B cell (primary cell): ENCODE measurements at regions of chr17 and their contacts with region 1.

Region 1: DNA sequence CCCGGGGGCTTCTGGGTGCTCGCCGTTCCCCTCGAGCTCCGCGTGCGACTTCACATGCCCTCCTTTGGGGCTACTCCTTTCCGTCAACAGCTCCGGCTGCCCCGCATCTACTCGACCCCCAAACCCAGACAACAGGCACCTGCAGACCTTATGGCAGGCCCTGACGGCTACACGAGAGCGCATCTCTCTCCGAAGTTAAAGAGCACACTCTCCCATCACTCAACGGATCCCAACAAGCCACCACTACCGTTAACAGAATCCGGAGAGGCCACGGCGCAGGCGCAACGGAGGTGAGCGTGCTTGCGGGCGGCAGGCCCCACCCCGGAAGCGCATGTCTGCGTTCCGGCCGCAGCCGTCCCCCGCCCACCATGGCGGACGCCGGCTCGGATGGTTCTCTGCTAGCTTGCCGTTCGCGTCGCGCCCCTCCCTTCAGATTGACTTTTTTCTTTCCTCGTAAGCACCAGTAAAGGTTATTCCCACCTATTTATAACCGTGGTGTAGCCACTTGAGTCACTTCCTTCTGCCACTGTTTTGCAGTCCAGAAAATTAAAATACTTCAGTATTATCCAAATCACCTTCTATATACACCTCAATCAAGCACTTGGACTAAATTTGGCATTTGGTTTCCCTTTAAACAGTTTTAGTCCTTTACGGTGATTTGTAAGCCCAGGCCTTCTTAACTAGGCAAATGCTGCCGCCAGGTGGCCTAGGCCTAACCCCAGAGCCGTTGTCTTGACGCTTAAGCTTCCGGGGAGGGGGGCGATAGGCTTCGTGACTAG is at the start of gene POLG2:
- DNase-seq: peak; percentile 95
- ATAC-seq: peak; percentile 86
- H3K4me3 ChIP-seq: peak within 1 kb of the TSS; percentile 71 to 90 (median 74)
- H3K4me3 Mint-ChIP-seq: peak within 1 kb of the TSS; percentile 99
- H3K27ac ChIP-seq: peak within 1 kb of the TSS; percentile 76 to 82
- H3K27ac Mint-ChIP-seq: peak within 1 kb of the TSS; percentile 98
- H3K4me1 ChIP-seq: peaks cover 29% of the 10 kb centered on the region in 2 donors
- H3K4me1 Mint-ChIP-seq: peaks cover 68% of the 10 kb centered on the region
- H3K27me3 ChIP-seq: no peaks in the 10 kb centered on the region
- H3K27me3 Mint-ChIP-seq: no peaks in the 10 kb centered on the region
- CTCF ChIP-seq: peak; percentile 55
- total RNA-seq, gene POLG2: 74.5 and 84.8 TPM in 2 replicates

Region 2: DNA sequence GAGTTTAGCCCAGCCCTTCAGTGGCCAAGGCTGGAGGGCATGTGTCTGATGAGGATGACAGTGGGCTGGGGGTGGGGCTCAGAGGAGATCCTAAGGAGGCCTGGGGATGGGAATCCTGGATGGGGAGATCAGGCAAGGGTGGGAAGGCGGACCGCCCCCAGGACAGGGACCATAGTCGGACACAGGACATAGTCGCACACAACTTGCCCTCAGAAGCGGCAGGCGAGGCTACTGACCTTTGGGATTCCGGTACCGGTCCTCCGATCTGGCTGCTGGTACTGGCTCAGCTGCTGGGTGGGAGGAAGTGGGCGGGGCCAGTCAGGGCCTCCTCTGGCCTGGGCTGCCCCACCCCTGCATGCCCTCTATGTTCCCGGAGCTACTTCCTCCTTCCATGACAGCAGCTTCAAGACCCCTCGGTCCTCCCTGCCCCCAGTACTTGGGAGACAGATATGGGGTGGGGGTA is 565.8 kb before region 1 on chr17:
- CTCF ChIA-PET with region 1: no interaction called
- POLR2A ChIA-PET with region 1: no interaction called
- intact Hi-C with region 1: loop called (anchors 5 kb)
- DNase-seq: peak; percentile 77
- ATAC-seq: peak; percentile 39
- H3K4me3 ChIP-seq: peak overlapping the region; percentile 80 to 100 (median 97)
- H3K4me3 Mint-ChIP-seq: peak overlapping the region; percentile 99
- H3K27ac ChIP-seq: peak overlapping the region; percentile 83 to 85
- H3K27ac Mint-ChIP-seq: peak overlapping the region; percentile 97
- H3K4me1 ChIP-seq: peaks cover 72 to 85% of the 10 kb centered on the region in 2 donors
- H3K4me1 Mint-ChIP-seq: peaks cover 86% of the 10 kb centered on the region
- H3K27me3 ChIP-seq: no peaks in the 10 kb centered on the region
- H3K27me3 Mint-ChIP-seq: no peaks in the 10 kb centered on the region
- CTCF ChIP-seq: no peak

Region 3: DNA sequence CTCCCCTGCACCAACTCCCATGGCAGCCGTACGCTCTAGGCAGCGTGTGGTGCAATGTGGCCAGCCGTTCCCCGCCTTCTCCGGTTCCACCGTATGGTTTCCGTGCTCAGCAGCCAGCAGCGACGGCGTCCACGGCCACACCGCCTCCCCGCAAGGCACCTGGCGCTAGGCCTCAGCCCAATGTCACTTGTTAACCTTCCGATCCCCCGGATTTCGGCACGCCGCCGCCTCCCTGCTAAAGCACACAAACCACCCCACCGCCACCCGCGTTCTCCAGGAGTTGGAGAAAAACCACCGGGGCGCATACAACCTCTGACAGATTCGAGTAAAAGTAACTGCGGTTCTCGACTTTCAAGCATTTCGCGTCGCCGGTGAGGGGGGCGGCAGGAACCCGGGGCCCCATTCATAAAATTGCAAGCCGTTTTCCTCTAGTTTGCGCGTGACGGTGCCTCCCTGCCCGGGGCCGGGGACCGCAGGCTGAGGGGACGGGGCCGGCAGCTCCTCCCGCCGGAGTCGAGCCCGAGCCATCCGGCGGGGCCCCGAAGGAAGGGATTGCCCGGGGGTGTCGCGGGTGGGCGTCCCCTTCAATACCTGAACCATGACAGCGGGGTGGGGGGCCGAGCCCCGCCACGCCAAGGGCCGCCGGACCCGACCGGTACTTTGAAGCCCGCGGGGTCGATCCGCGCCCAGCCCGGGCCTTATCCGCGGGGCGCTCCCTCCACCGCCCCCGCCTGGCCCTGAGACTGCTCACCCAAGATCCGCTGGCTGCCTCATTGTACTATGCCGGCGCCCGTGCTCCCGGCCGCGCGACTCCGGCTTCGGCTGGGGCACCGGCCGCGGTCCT is 234.3 kb before region 1 on chr17 and contains the start of gene TEX2:
- CTCF ChIA-PET with region 1: no interaction called
- POLR2A ChIA-PET with region 1: no interaction called
- intact Hi-C with region 1: loop called (anchors 2 kb)
- DNase-seq: peak; percentile 67
- ATAC-seq: peak; percentile 25
- H3K4me3 ChIP-seq: peak within 1 kb of the TSS; percentile 54 to 89 (median 74)
- H3K4me3 Mint-ChIP-seq: peak within 1 kb of the TSS; percentile 92
- H3K27ac ChIP-seq: peak within 1 kb of the TSS; percentile 48 to 68
- H3K27ac Mint-ChIP-seq: peak within 1 kb of the TSS; percentile 90
- H3K4me1 ChIP-seq: peaks cover 10 to 22% of the 10 kb centered on the region in 2 donors
- H3K4me1 Mint-ChIP-seq: peaks cover 28% of the 10 kb centered on the region
- H3K27me3 ChIP-seq: peaks cover 0 to 6% (median 0%) of the 10 kb centered on the region in 4 experiments
- H3K27me3 Mint-ChIP-seq: peaks cover 6% of the 10 kb centered on the region
- CTCF ChIP-seq: no peak
- total RNA-seq, gene TEX2: 6.9 and 7.6 TPM in 2 replicates

Region 4: GRCh38 chr17:64320613-64321553 is 176.1 kb before region 1 on chr17:
- CTCF ChIA-PET with region 1: interaction called, 3 read pairs
- POLR2A ChIA-PET with region 1: no interaction called
- intact Hi-C with region 1: loop called (anchors 5 kb)
- DNase-seq: peak; percentile 74
- ATAC-seq: peak; percentile 13
- H3K4me3 ChIP-seq: no peak overlapping the region
- H3K4me3 Mint-ChIP-seq: peak overlapping the region; percentile 56
- H3K27ac ChIP-seq: no peak overlapping the region
- H3K27ac Mint-ChIP-seq: peak overlapping the region; percentile 5
- H3K4me1 ChIP-seq: peaks cover 26 to 42% of the 10 kb centered on the region in 2 donors
- H3K4me1 Mint-ChIP-seq: peaks cover 54% of the 10 kb centered on the region
- H3K27me3 ChIP-seq: no peaks in the 10 kb centered on the region
- H3K27me3 Mint-ChIP-seq: peaks cover 3% of the 10 kb centered on the region
- CTCF ChIP-seq: peak; percentile 95

Region 5: DNA sequence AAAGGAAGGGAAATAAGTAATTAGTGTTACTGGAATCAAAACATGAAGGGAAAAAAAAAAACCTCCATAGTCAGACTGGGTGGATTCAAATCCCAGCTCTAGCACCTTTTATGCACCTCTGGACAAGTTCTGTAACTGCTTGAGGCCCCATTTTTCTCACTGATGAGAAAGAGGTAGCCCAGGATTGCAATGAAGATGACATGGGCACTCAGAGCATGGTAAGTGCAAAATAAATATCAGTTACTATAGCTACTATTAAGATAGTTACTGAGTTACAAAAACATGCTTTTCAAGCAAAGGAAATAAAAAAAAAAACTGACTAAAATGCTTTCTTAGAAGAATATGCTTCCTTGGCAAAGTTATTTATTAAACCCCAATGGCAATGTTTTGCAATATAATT is 68.6 kb after region 1 on chr17:
- CTCF ChIA-PET with region 1: no interaction called
- POLR2A ChIA-PET with region 1: no interaction called
- intact Hi-C with region 1: no loop called
- DNase-seq: no peak
- ATAC-seq: no peak
- H3K4me3 ChIP-seq: no peak overlapping the region
- H3K4me3 Mint-ChIP-seq: no peak overlapping the region
- H3K27ac ChIP-seq: no peak overlapping the region
- H3K27ac Mint-ChIP-seq: no peak overlapping the region
- H3K4me1 ChIP-seq: no peaks in the 10 kb centered on the region
- H3K4me1 Mint-ChIP-seq: no peaks in the 10 kb centered on the region
- H3K27me3 ChIP-seq: no peaks in the 10 kb centered on the region
- H3K27me3 Mint-ChIP-seq: no peaks in the 10 kb centered on the region
- CTCF ChIP-seq: no peak

Region 6: GRCh38 chr17:64580384-64581315 is 83.7 kb after region 1 on chr17:
- CTCF ChIA-PET with region 1: no interaction called
- POLR2A ChIA-PET with region 1: no interaction called
- intact Hi-C with region 1: no loop called
- DNase-seq: no peak
- ATAC-seq: no peak
- H3K4me3 ChIP-seq: no peak overlapping the region
- H3K4me3 Mint-ChIP-seq: no peak overlapping the region
- H3K27ac ChIP-seq: no peak overlapping the region
- H3K27ac Mint-ChIP-seq: no peak overlapping the region
- H3K4me1 ChIP-seq: no peaks in the 10 kb centered on the region
- H3K4me1 Mint-ChIP-seq: no peaks in the 10 kb centered on the region
- H3K27me3 ChIP-seq: no peaks in the 10 kb centered on the region
- H3K27me3 Mint-ChIP-seq: no peaks in the 10 kb centered on the region
- CTCF ChIP-seq: no peak

Region 7: DNA sequence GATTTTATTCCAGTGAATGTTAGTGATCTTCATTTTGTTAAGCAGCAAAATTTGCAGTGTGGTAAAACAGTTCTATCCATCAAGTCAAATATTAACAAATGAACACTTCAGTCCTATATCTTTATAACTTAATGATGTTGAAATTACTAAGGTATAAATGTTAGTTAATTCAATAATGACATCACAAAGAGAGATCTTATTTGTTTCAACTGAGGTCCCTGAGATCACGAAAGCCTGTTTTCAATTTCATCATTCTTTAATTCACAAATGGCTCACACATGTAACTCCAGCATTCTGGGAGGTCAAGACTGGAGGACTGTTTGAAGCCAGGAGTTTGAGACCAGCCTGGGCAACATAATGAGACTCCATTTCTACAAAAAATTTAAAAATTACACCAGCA is 151.3 kb after region 1 on chr17:
- CTCF ChIA-PET with region 1: interaction called, 4 read pairs
- POLR2A ChIA-PET with region 1: no interaction called
- intact Hi-C with region 1: loop called (anchors 2 kb)
- DNase-seq: no peak
- ATAC-seq: no peak
- H3K4me3 ChIP-seq: no peak overlapping the region
- H3K4me3 Mint-ChIP-seq: no peak overlapping the region
- H3K27ac ChIP-seq: no peak overlapping the region
- H3K27ac Mint-ChIP-seq: no peak overlapping the region
- H3K4me1 ChIP-seq: no peaks in the 10 kb centered on the region
- H3K4me1 Mint-ChIP-seq: peaks cover 13% of the 10 kb centered on the region
- H3K27me3 ChIP-seq: no peaks in the 10 kb centered on the region
- H3K27me3 Mint-ChIP-seq: no peaks in the 10 kb centered on the region
- CTCF ChIP-seq: no peak

Region 8: DNA sequence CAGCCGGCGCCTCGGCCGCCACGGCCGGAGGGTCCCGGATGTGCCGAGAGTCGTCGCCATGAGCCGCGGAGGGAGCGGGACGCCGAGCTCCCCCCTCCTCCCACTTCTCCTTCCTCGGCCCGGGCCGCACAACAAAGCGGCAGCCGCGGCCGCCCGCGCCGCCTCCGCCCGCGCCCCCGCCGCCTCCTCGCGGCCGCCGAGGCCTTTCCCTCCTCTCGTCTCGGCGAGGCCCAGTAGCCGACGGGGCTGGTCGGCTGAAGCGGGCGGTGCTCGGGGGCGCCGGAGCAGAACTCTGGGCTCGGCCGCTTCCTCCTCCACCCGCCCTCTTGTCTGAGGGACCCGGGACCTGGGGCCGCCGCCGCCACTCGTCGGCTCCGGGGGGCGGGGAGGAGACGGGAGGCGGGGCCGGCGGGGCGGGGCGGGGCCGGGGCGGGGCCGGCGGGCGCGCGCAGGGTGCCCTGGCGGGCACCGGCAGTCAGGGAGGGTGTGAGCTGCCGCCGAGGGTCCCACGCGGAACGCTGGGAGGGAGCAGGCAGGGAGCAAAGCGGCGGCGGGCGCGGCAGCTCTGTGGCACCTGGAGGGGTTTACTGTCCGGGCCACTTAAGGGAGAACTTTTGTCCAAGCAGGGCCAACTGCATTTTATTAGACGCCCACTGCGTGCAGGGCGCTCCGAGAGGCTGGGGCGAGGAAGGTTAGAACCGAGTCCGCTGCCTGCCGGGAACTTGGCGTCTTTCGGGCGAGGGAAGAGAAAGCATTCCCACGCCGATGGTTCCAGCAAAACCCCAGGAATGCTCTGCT is 165.2 kb after region 1 on chr17 and contains the start of gene SMURF2:
- CTCF ChIA-PET with region 1: no interaction called
- POLR2A ChIA-PET with region 1: no interaction called
- intact Hi-C with region 1: loop called (anchors 2 kb)
- DNase-seq: peak; percentile 90
- ATAC-seq: peak; percentile 89
- H3K4me3 ChIP-seq: peak within 1 kb of the TSS; percentile 50 to 84 (median 68)
- H3K4me3 Mint-ChIP-seq: peak within 1 kb of the TSS; percentile 97
- H3K27ac ChIP-seq: peak within 1 kb of the TSS; percentile 59 to 75
- H3K27ac Mint-ChIP-seq: peak within 1 kb of the TSS; percentile 98
- H3K4me1 ChIP-seq: peaks cover 11 to 21% of the 10 kb centered on the region in 2 donors
- H3K4me1 Mint-ChIP-seq: peaks cover 28% of the 10 kb centered on the region
- H3K27me3 ChIP-seq: no peaks in the 10 kb centered on the region
- H3K27me3 Mint-ChIP-seq: no peaks in the 10 kb centered on the region
- CTCF ChIP-seq: peak; percentile 12
- total RNA-seq, gene SMURF2: 32.8 and 37.1 TPM in 2 replicates